Mammary epithelial cell (primary cell): ENCODE measurements at regions of chr4 and their contacts with region 1.

Region 1: GRCh38 chr4:86043755-86044592 is 315.9 kb downstream of the MAPK10 start:
- DNase-seq: peak; percentile 29
- H3K4me3 ChIP-seq: no peak overlapping the region
- H3K27ac ChIP-seq: no peak overlapping the region
- H3K4me1 ChIP-seq: peaks cover 3% of the 10 kb centered on the region
- H3K27me3 ChIP-seq: no peaks in the 10 kb centered on the region
- CTCF ChIP-seq: peak; percentile 48 to 58

Region 2: DNA sequence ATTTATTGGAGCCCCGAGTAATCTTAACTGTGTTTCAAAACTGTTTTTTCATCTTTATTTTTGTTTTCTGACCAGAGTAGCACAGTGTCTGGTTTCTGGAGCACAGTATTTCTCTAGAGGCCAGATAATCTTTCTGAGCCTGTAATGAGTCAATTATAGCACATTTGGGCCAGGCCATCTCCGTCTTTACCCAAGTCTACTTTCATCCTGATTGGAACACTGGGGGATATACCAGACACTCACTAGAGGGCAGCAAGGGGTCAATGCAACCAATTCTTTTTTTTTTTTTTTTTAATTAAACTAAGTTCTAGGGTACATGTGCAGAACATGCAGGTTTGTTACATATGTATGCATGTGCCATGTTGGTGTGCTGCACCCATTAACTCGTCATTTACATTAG is 287.0 kb before region 1 on chr4:
- CTCF ChIA-PET with region 1: no interaction called
- dilution Hi-C with region 1: no loop called
- in situ Hi-C with region 1: no loop called
- intact Hi-C with region 1: loop called (anchors 1 kb)
- DNase-seq: no peak
- H3K4me3 ChIP-seq: no peak overlapping the region
- H3K27ac ChIP-seq: no peak overlapping the region
- H3K4me1 ChIP-seq: no peaks in the 10 kb centered on the region
- H3K27me3 ChIP-seq: no peaks in the 10 kb centered on the region
- CTCF ChIP-seq: peak; percentile 40 to 58

Region 3: GRCh38 chr4:85798012-85798770 is 245.8 kb before region 1 on chr4:
- CTCF ChIA-PET with region 1: no interaction called
- dilution Hi-C with region 1: no loop called
- in situ Hi-C with region 1: no loop called
- intact Hi-C with region 1: loop called (anchors 2 kb)
- DNase-seq: peak; percentile 53
- H3K4me3 ChIP-seq: no peak overlapping the region
- H3K27ac ChIP-seq: no peak overlapping the region
- H3K4me1 ChIP-seq: peaks cover 6% of the 10 kb centered on the region
- H3K27me3 ChIP-seq: no peaks in the 10 kb centered on the region
- CTCF ChIP-seq: no peak

Region 4: GRCh38 chr4:85986266-85986665 is 57.7 kb before region 1 on chr4:
- CTCF ChIA-PET with region 1: interaction called, 12 read pairs
- dilution Hi-C with region 1: no loop called
- in situ Hi-C with region 1: no loop called
- intact Hi-C with region 1: loop called (anchors 5 kb)
- DNase-seq: peak; percentile 4
- H3K4me3 ChIP-seq: no peak overlapping the region
- H3K27ac ChIP-seq: no peak overlapping the region
- H3K4me1 ChIP-seq: no peaks in the 10 kb centered on the region
- H3K27me3 ChIP-seq: no peaks in the 10 kb centered on the region
- CTCF ChIP-seq: no peak

Region 5: DNA sequence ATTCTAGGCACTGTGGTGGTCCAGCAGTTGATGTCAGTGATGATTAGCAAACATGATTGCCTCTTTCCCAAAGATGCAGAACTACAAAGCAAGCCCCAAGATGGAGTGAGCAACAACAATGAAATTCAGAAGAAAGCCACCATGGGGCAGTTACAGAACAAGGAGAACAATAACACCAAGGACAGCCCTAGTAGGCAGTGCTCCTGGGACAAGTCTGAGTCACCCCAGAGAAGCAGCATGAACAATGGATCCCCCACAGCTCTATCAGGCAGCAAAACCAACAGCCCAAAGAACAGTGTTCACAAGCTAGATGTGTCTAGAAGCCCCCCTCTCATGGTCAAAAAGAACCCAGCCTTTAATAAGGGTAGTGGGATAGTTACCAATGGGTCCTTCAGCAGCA is 49.4 kb before region 1 on chr4:
- CTCF ChIA-PET with region 1: interaction called, 3 read pairs
- dilution Hi-C with region 1: no loop called
- in situ Hi-C with region 1: no loop called
- intact Hi-C with region 1: loop called (anchors 5 kb)
- DNase-seq: no peak
- H3K4me3 ChIP-seq: no peak overlapping the region
- H3K27ac ChIP-seq: no peak overlapping the region
- H3K4me1 ChIP-seq: no peaks in the 10 kb centered on the region
- H3K27me3 ChIP-seq: no peaks in the 10 kb centered on the region
- CTCF ChIP-seq: no peak

Region 6: GRCh38 chr4:86223472-86223871 is 179.5 kb after region 1 on chr4:
- CTCF ChIA-PET with region 1: no interaction called
- dilution Hi-C with region 1: no loop called
- in situ Hi-C with region 1: no loop called
- intact Hi-C with region 1: loop called (anchors 10 kb)
- DNase-seq: peak; percentile 19
- H3K4me3 ChIP-seq: no peak overlapping the region
- H3K27ac ChIP-seq: no peak overlapping the region
- H3K4me1 ChIP-seq: peaks cover 7% of the 10 kb centered on the region
- H3K27me3 ChIP-seq: no peaks in the 10 kb centered on the region
- CTCF ChIP-seq: peak; percentile 49 to 76